T-cell (primary cell): ENCODE measurements at regions of chr3 and their contacts with region 1.

Region 1: GRCh38 chr3:42351207-42351606 is 59.2 kb downstream of the LYZL4 start:
- DNase-seq: no peak
- ATAC-seq: no peak
- H3K4me3 ChIP-seq: no peak overlapping the region
- H3K4me3 Mint-ChIP-seq: no peak overlapping the region
- H3K27ac ChIP-seq: no peak overlapping the region
- H3K27ac Mint-ChIP-seq: peak overlapping the region in 1 of 2 donors; percentile 72
- H3K4me1 ChIP-seq: peaks cover 12% of the 10 kb centered on the region in 2 experiments
- H3K4me1 Mint-ChIP-seq: peaks cover 44 to 48% (median 48%) of the 10 kb centered on the region in 3 donors
- H3K27me3 ChIP-seq: peaks cover 0 to 10% of the 10 kb centered on the region in 2 experiments
- H3K27me3 Mint-ChIP-seq: peaks cover 3 to 4% of the 10 kb centered on the region in 2 donors

Region 2: DNA sequence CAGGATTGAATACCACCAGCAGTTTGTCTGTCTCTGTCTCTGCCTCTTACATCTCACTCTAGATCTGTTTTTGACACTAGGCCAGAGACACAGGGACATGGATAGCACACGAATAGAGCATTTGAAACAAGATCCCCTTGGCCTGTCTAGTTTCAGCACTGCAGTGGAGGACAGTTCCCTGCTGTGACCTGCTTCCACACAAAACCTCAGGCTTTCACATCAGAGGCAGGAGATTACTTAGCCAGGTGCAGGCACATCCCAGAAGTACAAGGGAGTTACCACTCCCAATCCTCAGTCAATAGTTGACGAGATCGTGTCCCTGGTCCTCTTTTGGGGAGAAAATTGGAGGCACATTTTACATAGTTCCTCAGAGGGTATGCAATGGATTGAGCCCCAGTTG is 51.2 kb before region 1 on chr3:
- CTCF ChIA-PET with region 1: interaction called in 1 of 2 experiments, 10 read pairs
- POLR2A ChIA-PET with region 1: no interaction called
- DNase-seq: peak in 18 of 35 experiments; percentile 1 to 33 (median 10)
- ATAC-seq: no peak
- H3K4me3 ChIP-seq: no peak overlapping the region
- H3K4me3 Mint-ChIP-seq: no peak overlapping the region
- H3K27ac ChIP-seq: no peak overlapping the region
- H3K27ac Mint-ChIP-seq: no peak overlapping the region
- H3K4me1 ChIP-seq: no peaks in the 10 kb centered on the region
- H3K4me1 Mint-ChIP-seq: peaks cover 9 to 10% (median 9%) of the 10 kb centered on the region in 3 donors
- H3K27me3 ChIP-seq: peaks cover 0 to 8% of the 10 kb centered on the region in 2 experiments
- H3K27me3 Mint-ChIP-seq: peaks cover 10 to 13% of the 10 kb centered on the region in 2 donors